ENCODE measurements at regions of chr13 and their contacts with region 1.

Region 1: GRCh38 chr13:59024434-59024833 is 1139.3 kb downstream of the DIAPH3 start:
- DNase-seq: no peak
- H3K4me3 ChIP-seq: no peak overlapping the region
- CTCF ChIP-seq: no peak
- POLR2A ChIP-seq: no peak

Region 2: GRCh38 chr13:57601536-57601935 is 1422.9 kb before region 1 on chr13:
- intact Hi-C with region 1: no loop called
- DNase-seq: no peak
- H3K4me3 ChIP-seq: no peak overlapping the region
- CTCF ChIP-seq: no peak
- POLR2A ChIP-seq: no peak

Region 3: GRCh38 chr13:58869566-58869965 is 154.9 kb before region 1 on chr13:
- intact Hi-C with region 1: loop called (anchors 10 kb)
- DNase-seq: no peak
- H3K4me3 ChIP-seq: no peak overlapping the region
- CTCF ChIP-seq: no peak
- POLR2A ChIP-seq: no peak

Region 4: GRCh38 chr13:59809564-59809963 is 785.1 kb after region 1 on chr13:
- intact Hi-C with region 1: no loop called
- DNase-seq: no peak
- H3K4me3 ChIP-seq: no peak overlapping the region
- CTCF ChIP-seq: no peak
- POLR2A ChIP-seq: no peak